Prostate gland (tissue), 2 donors: ENCODE measurements at regions of chr3 and their contacts with region 1.

Region 1: GRCh38 chr3:122415720-122416654 is at the start of gene WDR5B:
- DNase-seq: peak; percentile 97
- H3K4me3 ChIP-seq: peak within 1 kb of the TSS; percentile 48 to 61
- H3K27ac ChIP-seq: peak within 1 kb of the TSS; percentile 80 to 93
- H3K4me1 ChIP-seq: no peaks in the 10 kb centered on the region
- H3K27me3 ChIP-seq: no peaks in the 10 kb centered on the region
- CTCF ChIP-seq: peak in 2 of 4 experiments; percentile 18 to 24
- POLR2A ChIP-seq: peak; percentile 79
- total RNA-seq, gene WDR5B: 4.5 to 6.5 TPM

Region 2: DNA sequence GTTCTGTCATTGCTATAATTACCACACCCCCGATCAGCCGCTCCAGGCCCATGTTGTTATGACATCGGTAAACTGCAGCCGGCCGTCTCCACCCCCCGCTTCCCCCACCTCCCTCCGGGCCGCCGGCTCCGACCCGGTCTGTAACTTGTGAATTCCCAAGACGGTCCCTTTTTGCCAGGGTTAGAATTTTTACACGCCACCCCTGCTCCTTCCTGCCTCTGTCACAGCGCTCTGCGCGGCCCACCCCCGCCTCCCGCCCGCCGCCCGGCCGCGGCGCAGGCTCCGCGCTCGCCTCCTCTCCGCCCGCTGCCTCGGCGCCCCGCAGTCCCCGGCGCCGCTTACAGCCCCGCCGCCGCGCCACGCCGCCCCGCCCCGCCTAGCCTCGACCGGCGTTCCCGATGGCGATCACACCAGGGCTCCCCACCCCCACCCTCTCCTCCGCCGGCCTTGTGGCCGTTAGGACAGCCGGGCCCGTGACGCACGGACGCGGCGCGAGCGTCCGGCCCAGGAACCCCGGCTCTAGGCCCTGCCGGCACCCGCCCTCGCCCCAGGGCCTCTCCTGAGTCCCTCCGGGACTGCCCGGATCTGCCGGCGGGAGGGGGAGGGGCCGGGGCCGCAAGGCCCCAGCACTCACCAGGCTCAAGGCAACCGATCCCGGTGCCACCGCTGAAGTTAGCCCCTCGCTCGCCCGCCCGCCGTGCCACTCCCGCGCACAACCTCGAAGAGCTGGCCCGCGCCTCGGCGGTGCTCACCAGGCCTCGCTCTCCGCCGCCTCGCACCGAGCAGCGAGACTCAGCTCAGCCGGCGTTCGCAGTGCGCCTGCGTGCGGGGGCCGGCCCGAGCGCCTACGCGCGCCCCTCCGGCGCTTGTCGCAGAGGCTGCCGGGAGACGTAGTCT is 98.4 kb after region 1 on chr3 and contains the start of gene KPNA1:
- intact Hi-C with region 1: loop called (anchors 10 kb)
- DNase-seq: peak; percentile 76
- H3K4me3 ChIP-seq: peak within 1 kb of the TSS; percentile 86 to 87
- H3K27ac ChIP-seq: peak within 1 kb of the TSS; percentile 92 to 96
- H3K4me1 ChIP-seq: no peaks in the 10 kb centered on the region
- H3K27me3 ChIP-seq: no peaks in the 10 kb centered on the region
- CTCF ChIP-seq: no peak
- POLR2A ChIP-seq: peak; percentile 91
- total RNA-seq, gene KPNA1: 27.1 to 38.7 TPM